SK-N-SH (cell line): ENCODE measurements at regions of chr12 and their contacts with region 1.

Region 1: GRCh38 chr12:1093166-1093751 is 102.2 kb downstream of the ERC1 start:
- DNase-seq: peak; percentile 54
- H3K4me3 ChIP-seq: no peak overlapping the region; a peak in 1 of 4 replicates
- H3K27ac ChIP-seq: peak overlapping the region in 1 of 2 experiments; percentile 32; a peak in 1 of 4 replicates
- H3K4me1 ChIP-seq: peaks cover 0 to 8% of the 10 kb centered on the region in 2 experiments; a peak in 1 of 4 replicates
- H3K27me3 ChIP-seq: no peaks in the 10 kb centered on the region
- CTCF ChIP-seq: peak; percentile 82
- EP300 ChIP-seq: no peak
- RAD21 ChIP-seq: peak; percentile 91

Region 2: GRCh38 chr12:569803-570434 is 523.3 kb before region 1 on chr12:
- CTCF ChIA-PET with region 1: interaction called, 10 read pairs
- POLR2A ChIA-PET with region 1: no interaction called
- DNase-seq: peak; percentile 98
- H3K4me3 ChIP-seq: peak overlapping the region; percentile 62 to 88
- H3K27ac ChIP-seq: peak overlapping the region; percentile 75 to 76
- H3K4me1 ChIP-seq: peaks cover 0 to 24% of the 10 kb centered on the region in 2 experiments; a peak in 2 of 4 replicates
- H3K27me3 ChIP-seq: no peaks in the 10 kb centered on the region
- CTCF ChIP-seq: peak; percentile 92
- EP300 ChIP-seq: no peak
- RAD21 ChIP-seq: peak; percentile 88

Region 3: DNA sequence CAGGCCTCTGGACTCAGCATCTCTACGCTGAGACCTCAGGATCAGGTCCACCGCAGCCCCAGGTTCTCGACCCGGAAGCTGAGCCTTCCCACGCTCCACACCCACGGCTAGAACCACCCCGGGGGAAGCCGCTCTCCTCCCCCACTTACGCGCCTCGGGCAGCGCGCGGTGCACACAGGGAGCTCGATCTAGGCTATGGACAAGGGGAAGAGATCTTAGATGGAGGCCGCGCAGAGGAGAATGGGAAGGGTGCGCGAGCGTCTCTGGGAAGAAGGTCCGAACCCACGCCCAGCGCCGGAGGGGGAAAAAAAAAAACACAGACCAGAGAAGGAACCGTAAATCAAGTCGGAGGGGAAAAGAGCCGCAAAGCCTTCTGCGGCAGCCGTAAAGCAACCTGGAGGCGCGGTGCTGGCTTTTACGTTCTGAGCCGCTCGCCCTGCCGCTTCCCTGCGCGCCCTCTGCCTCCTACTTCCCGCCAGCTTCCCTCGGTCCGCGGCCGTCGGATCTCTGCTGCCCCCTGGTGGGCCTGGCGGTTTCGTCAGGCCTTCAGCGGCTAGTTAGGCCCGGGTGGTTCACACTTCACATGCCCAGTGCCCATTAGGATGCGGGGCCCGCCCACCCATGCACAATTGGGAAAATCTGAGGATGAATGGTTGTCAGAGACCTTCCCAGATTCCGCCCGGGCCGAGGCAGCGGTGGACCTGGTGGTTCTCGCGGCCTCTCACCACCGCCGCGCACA is 143.6 kb before region 1 on chr12 and contains the start of gene RAD52:
- CTCF ChIA-PET with region 1: interaction called, 23 read pairs
- POLR2A ChIA-PET with region 1: interaction called, 4 read pairs
- DNase-seq: peak; percentile 91
- H3K4me3 ChIP-seq: peak within 1 kb of the TSS; percentile 69 to 94
- H3K27ac ChIP-seq: peak within 1 kb of the TSS; percentile 95
- H3K4me1 ChIP-seq: peaks cover 2 to 6% of the 10 kb centered on the region in 2 experiments; a peak in 3 of 4 replicates
- H3K27me3 ChIP-seq: no peaks in the 10 kb centered on the region
- CTCF ChIP-seq: peak; percentile 91
- EP300 ChIP-seq: peak; percentile 18 to 69; a peak in 1 of 4 replicates
- RAD21 ChIP-seq: peak; percentile 79
- polyA plus RNA-seq, gene RAD52: 11.2 and 12.1 TPM in 2 replicates

Region 4: DNA sequence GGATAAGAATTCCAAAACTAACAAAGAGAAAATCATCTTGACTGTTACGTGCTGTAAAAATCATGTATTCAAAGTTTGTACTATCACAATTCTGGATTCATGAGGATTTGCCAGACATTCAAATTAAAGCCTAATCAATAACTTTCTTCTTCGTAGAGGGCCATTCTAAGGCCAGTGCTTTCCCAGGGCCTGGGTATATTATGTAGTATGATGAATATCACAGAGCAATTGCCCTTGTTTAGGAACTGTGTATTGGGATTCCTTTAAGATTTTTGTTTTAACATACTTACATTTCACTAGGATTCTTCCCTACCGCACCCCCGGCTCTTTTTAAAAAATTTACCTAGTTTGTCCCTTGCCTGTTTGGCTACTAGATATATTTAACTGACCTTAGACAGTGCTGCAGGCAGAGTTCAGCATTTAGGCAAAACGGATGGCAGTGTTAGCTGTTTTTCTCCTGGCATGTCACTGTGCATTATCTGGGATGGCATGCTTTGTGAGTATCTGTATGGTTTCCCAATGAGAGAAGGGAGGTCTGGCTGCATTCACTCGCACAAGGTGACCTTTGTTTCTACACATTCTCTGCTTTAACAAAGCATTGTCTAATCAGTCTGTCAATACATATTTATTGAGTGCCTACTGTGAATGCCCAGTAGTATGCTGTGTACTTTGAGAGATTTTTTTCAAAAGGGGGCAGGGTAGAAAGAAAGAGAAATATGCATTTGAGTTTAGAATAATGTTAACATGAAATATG is 39.0 kb before region 1 on chr12:
- CTCF ChIA-PET with region 1: interaction called, 10 read pairs
- POLR2A ChIA-PET with region 1: no interaction called
- DNase-seq: peak; percentile 67
- H3K4me3 ChIP-seq: no peak overlapping the region
- H3K27ac ChIP-seq: peak overlapping the region; percentile 6 to 83; a peak in 3 of 4 replicates
- H3K4me1 ChIP-seq: peaks cover 0 to 20% of the 10 kb centered on the region in 2 experiments; a peak in 3 of 4 replicates
- H3K27me3 ChIP-seq: no peaks in the 10 kb centered on the region
- CTCF ChIP-seq: no peak
- EP300 ChIP-seq: peak in 1 of 2 experiments; percentile 51; a peak in 1 of 4 replicates
- RAD21 ChIP-seq: no peak

Region 5: DNA sequence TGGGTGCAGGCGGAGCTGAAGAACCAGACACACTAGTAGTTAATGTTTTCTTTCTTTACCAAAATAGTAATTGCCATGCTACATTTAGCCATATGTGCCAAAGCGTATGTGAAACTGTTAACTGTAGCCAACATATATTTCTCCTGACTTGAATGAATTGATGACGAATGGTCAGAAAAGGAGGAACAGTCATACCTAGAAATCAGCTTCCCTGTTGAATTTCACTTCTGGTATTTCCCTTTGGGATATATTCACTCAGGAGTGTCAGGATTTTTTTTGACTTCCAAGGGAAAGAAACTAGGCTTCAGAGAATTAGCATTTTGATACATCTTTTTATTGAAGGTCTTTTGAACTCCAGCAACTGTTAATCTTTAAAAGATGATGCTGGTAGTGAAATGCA is 15.3 kb before region 1 on chr12:
- CTCF ChIA-PET with region 1: interaction called, 27 read pairs
- POLR2A ChIA-PET with region 1: no interaction called
- DNase-seq: no peak
- H3K4me3 ChIP-seq: no peak overlapping the region
- H3K27ac ChIP-seq: no peak overlapping the region; a peak in 1 of 4 replicates
- H3K4me1 ChIP-seq: peaks cover 1 to 4% of the 10 kb centered on the region in 2 experiments; a peak in 3 of 4 replicates
- H3K27me3 ChIP-seq: no peaks in the 10 kb centered on the region
- CTCF ChIP-seq: no peak
- EP300 ChIP-seq: no peak
- RAD21 ChIP-seq: no peak

Region 6: DNA sequence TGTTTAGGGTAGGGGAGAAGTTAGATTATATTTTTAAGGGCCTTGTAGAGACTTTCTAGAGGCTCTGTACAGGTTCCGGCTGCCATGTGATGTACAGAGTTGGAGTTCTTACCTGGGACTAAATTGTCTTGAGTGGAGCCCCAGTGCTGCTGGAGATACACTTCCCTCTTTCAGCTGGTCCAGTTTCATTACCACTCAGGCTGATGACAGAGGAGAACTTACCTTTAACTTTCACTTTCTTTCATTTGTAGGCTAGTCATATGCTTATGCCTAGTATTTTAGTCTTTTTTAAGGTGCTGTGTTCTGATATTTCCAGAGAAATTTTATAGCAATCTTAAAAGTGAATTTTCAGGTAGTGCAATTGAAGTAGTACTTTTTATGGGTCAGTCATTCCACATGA is 15.0 kb after region 1 on chr12:
- CTCF ChIA-PET with region 1: interaction called, 10 read pairs
- POLR2A ChIA-PET with region 1: no interaction called
- DNase-seq: no peak
- H3K4me3 ChIP-seq: no peak overlapping the region
- H3K27ac ChIP-seq: no peak overlapping the region
- H3K4me1 ChIP-seq: no peaks in the 10 kb centered on the region
- H3K27me3 ChIP-seq: no peaks in the 10 kb centered on the region
- CTCF ChIP-seq: no peak
- EP300 ChIP-seq: no peak
- RAD21 ChIP-seq: no peak